ENCODE measurements at regions of chr9 and their contacts with region 1.

Region 1: GRCh38 chr9:806285-807156 is 35.0 kb upstream of the DMRT1 start:
- DNase-seq: peak; percentile 54
- H3K4me3 ChIP-seq: no peak overlapping the region
- H3K27ac ChIP-seq: no peak overlapping the region
- H3K4me1 ChIP-seq: no peaks in the 10 kb centered on the region
- CTCF ChIP-seq: peak; percentile 92

Region 2: GRCh38 chr9:385818-386398 is 420.6 kb before region 1 on chr9:
- CTCF ChIA-PET with region 1: no interaction called
- POLR2A ChIA-PET with region 1: no interaction called
- intact Hi-C with region 1: loop called (anchors 2 kb)
- DNase-seq: peak; percentile 67
- H3K4me3 ChIP-seq: no peak overlapping the region
- H3K27ac ChIP-seq: no peak overlapping the region
- H3K4me1 ChIP-seq: no peaks in the 10 kb centered on the region
- CTCF ChIP-seq: peak; percentile 89

Region 3: DNA sequence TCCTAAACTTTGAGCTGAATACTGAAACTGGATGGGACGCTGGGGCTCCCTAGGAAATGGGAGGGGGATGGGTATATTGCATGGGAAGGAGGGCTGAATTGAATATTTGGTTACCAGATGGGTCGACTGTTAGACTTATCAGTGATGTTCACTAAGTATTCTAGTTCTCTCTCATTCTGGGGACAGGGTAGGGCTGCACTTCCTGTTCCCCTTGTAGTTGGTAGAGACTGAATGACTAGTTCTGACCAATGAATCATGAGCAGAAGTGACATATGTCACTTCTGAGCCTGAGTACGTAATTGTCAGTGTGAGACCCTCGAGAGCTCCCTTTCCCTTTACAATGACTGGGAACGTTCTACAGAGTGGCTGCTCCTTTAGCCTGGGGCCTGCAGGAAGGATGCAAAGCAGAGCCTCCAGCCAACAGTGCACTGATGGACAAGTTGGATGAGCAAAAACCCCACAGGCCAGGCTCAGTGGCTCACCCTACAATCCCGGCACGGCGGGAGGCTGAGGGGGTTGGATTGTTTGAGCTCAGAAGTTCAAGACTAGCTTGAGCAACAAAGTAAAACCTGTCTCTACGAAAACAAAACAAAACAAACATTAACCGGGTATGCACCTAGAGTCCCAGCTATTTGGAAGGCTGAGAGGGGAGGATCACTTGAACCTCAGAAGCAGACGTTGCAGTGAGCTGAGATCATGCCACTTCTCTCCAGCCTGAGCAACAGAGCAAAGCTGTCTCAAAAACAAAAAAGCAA is 20.3 kb before region 1 on chr9:
- CTCF ChIA-PET with region 1: no interaction called
- POLR2A ChIA-PET with region 1: no interaction called
- intact Hi-C with region 1: no loop called
- DNase-seq: no peak
- H3K4me3 ChIP-seq: no peak overlapping the region
- H3K27ac ChIP-seq: no peak overlapping the region
- H3K4me1 ChIP-seq: no peaks in the 10 kb centered on the region
- CTCF ChIP-seq: no peak

Region 4: GRCh38 chr9:1051584-1052275 is 245.2 kb after region 1 on chr9:
- CTCF ChIA-PET with region 1: no interaction called
- POLR2A ChIA-PET with region 1: no interaction called
- intact Hi-C with region 1: no loop called
- DNase-seq: peak; percentile 78
- H3K4me3 ChIP-seq: peak overlapping the region; percentile 69
- H3K27ac ChIP-seq: peak overlapping the region; percentile 66
- H3K4me1 ChIP-seq: peaks cover 12% of the 10 kb centered on the region
- CTCF ChIP-seq: peak; percentile 50